CD8-positive, alpha-beta T cell (primary cell): ENCODE measurements at regions of chr3 and their contacts with region 1.

Region 1: GRCh38 chr3:133487920-133488540 is 85.5 kb upstream of the CDV3 start:
- DNase-seq: peak in 8 of 9 experiments; percentile 45 to 79 (median 71)
- ATAC-seq: no peak
- H3K4me3 ChIP-seq: no peak overlapping the region
- H3K4me3 Mint-ChIP-seq: no peak overlapping the region
- H3K27ac ChIP-seq: no peak overlapping the region
- H3K27ac Mint-ChIP-seq: peak overlapping the region; percentile 96
- H3K4me1 ChIP-seq: peaks cover 50% of the 10 kb centered on the region
- H3K4me1 Mint-ChIP-seq: peaks cover 59% of the 10 kb centered on the region
- H3K27me3 ChIP-seq: no peaks in the 10 kb centered on the region
- H3K27me3 Mint-ChIP-seq: no peaks in the 10 kb centered on the region
- CTCF ChIP-seq: peak; percentile 88

Region 2: GRCh38 chr3:133413161-133414020 is 74.6 kb before region 1 on chr3:
- CTCF ChIA-PET with region 1: no interaction called
- POLR2A ChIA-PET with region 1: no interaction called
- intact Hi-C with region 1: no loop called
- DNase-seq: no peak
- ATAC-seq: no peak
- H3K4me3 ChIP-seq: no peak overlapping the region
- H3K4me3 Mint-ChIP-seq: no peak overlapping the region
- H3K27ac ChIP-seq: no peak overlapping the region
- H3K27ac Mint-ChIP-seq: peak overlapping the region; percentile 55
- H3K4me1 ChIP-seq: no peaks in the 10 kb centered on the region
- H3K4me1 Mint-ChIP-seq: peaks cover 10% of the 10 kb centered on the region
- H3K27me3 ChIP-seq: peaks cover 0 to 2% of the 10 kb centered on the region in 2 experiments
- H3K27me3 Mint-ChIP-seq: no peaks in the 10 kb centered on the region
- CTCF ChIP-seq: no peak

Region 3: GRCh38 chr3:133475245-133476010 is 12.6 kb before region 1 on chr3:
- CTCF ChIA-PET with region 1: interaction called, 14 read pairs
- POLR2A ChIA-PET with region 1: interaction called, 3 read pairs
- intact Hi-C with region 1: no loop called
- DNase-seq: no peak
- ATAC-seq: no peak
- H3K4me3 ChIP-seq: no peak overlapping the region
- H3K4me3 Mint-ChIP-seq: no peak overlapping the region
- H3K27ac ChIP-seq: no peak overlapping the region
- H3K27ac Mint-ChIP-seq: peak overlapping the region; percentile 58
- H3K4me1 ChIP-seq: peaks cover 16% of the 10 kb centered on the region
- H3K4me1 Mint-ChIP-seq: peaks cover 46% of the 10 kb centered on the region
- H3K27me3 ChIP-seq: no peaks in the 10 kb centered on the region
- H3K27me3 Mint-ChIP-seq: no peaks in the 10 kb centered on the region
- CTCF ChIP-seq: no peak

Region 4: GRCh38 chr3:133573054-133573628 is 85.1 kb after region 1 on chr3:
- CTCF ChIA-PET with region 1: interaction called, 110 read pairs
- POLR2A ChIA-PET with region 1: interaction called, 72 read pairs
- intact Hi-C with region 1: loop called (anchors 1 kb)
- DNase-seq: peak; percentile 100
- ATAC-seq: peak; percentile 83
- H3K4me3 ChIP-seq: peak overlapping the region; percentile 45 to 58
- H3K4me3 Mint-ChIP-seq: peak overlapping the region; percentile 89
- H3K27ac ChIP-seq: peak overlapping the region; percentile 76 to 93
- H3K27ac Mint-ChIP-seq: peak overlapping the region; percentile 99
- H3K4me1 ChIP-seq: peaks cover 38% of the 10 kb centered on the region
- H3K4me1 Mint-ChIP-seq: peaks cover 58% of the 10 kb centered on the region
- H3K27me3 ChIP-seq: no peaks in the 10 kb centered on the region
- H3K27me3 Mint-ChIP-seq: no peaks in the 10 kb centered on the region
- CTCF ChIP-seq: no peak

Region 5: DNA sequence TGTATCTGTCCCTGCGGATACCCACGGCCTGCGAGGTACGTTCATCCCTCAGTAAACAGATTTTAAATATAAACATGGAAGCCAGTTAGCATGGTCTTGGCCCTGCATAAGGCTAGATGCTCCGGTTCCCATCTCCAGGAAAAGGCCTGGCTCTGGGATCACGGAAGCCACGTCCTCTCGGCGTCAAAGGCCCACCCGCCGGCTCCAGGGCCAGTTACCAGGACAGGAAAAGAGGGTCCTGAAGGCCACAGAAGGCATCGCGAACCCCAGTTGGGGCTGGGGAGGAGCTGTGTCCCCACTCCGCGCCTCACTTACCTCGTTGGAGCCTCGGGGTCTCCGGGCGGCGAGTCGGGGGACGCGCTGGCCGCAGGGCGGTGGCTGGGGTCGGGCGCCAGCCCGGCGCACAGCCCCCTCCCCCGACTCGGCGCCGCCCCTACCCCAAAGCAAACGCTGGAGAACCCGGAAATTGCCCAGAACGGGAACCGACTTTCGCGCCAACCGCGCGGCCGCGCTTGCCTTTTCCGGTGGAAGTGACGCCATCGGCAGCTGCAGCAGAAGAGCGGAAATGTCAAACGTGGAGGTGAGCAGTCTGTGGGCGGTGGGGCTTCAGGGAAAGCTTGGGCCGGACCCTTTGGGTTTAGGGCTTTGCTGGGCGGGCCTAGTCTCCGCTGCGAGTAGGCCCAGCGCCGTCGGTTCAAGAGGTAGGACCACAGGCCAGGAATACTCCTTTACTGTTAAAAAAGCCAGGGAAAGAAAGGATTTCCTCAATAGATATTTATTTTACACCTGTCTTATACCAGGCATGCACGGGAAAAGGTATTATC is 173.6 kb after region 1 on chr3 and contains the start of gene TOPBP1:
- CTCF ChIA-PET with region 1: no interaction called
- POLR2A ChIA-PET with region 1: no interaction called
- intact Hi-C with region 1: loop called (anchors 2 to 5 kb)
- DNase-seq: peak; percentile 58 to 92 (median 87)
- ATAC-seq: peak; percentile 82
- H3K4me3 ChIP-seq: peak within 1 kb of the TSS; percentile 86 to 90
- H3K4me3 Mint-ChIP-seq: peak within 1 kb of the TSS; percentile 98
- H3K27ac ChIP-seq: peak within 1 kb of the TSS; percentile 83 to 85
- H3K27ac Mint-ChIP-seq: peak within 1 kb of the TSS; percentile 98
- H3K4me1 ChIP-seq: peaks cover 26% of the 10 kb centered on the region
- H3K4me1 Mint-ChIP-seq: peaks cover 45% of the 10 kb centered on the region
- H3K27me3 ChIP-seq: no peaks in the 10 kb centered on the region
- H3K27me3 Mint-ChIP-seq: no peaks in the 10 kb centered on the region
- CTCF ChIP-seq: no peak
- total RNA-seq, gene TOPBP1: 32.4 to 33.9 TPM

Region 6: GRCh38 chr3:133815386-133815785 is 327.4 kb after region 1 on chr3:
- CTCF ChIA-PET with region 1: no interaction called
- POLR2A ChIA-PET with region 1: no interaction called
- intact Hi-C with region 1: loop called in 1 of 2 experiments (anchors 5 kb)
- DNase-seq: no peak
- ATAC-seq: no peak
- H3K4me3 ChIP-seq: no peak overlapping the region
- H3K4me3 Mint-ChIP-seq: no peak overlapping the region
- H3K27ac ChIP-seq: no peak overlapping the region
- H3K27ac Mint-ChIP-seq: no peak overlapping the region
- H3K4me1 ChIP-seq: no peaks in the 10 kb centered on the region
- H3K4me1 Mint-ChIP-seq: peaks cover 21% of the 10 kb centered on the region
- H3K27me3 ChIP-seq: no peaks in the 10 kb centered on the region
- H3K27me3 Mint-ChIP-seq: no peaks in the 10 kb centered on the region
- CTCF ChIP-seq: no peak